Left cardiac atrium (tissue), 4 donors: ENCODE measurements at regions of chr7 and their contacts with region 1.

Region 1: GRCh38 chr7:38796626-38797501 is 112.1 kb downstream of the VPS41 start:
- DNase-seq: peak; percentile 32
- ATAC-seq: no peak

Region 2: DNA sequence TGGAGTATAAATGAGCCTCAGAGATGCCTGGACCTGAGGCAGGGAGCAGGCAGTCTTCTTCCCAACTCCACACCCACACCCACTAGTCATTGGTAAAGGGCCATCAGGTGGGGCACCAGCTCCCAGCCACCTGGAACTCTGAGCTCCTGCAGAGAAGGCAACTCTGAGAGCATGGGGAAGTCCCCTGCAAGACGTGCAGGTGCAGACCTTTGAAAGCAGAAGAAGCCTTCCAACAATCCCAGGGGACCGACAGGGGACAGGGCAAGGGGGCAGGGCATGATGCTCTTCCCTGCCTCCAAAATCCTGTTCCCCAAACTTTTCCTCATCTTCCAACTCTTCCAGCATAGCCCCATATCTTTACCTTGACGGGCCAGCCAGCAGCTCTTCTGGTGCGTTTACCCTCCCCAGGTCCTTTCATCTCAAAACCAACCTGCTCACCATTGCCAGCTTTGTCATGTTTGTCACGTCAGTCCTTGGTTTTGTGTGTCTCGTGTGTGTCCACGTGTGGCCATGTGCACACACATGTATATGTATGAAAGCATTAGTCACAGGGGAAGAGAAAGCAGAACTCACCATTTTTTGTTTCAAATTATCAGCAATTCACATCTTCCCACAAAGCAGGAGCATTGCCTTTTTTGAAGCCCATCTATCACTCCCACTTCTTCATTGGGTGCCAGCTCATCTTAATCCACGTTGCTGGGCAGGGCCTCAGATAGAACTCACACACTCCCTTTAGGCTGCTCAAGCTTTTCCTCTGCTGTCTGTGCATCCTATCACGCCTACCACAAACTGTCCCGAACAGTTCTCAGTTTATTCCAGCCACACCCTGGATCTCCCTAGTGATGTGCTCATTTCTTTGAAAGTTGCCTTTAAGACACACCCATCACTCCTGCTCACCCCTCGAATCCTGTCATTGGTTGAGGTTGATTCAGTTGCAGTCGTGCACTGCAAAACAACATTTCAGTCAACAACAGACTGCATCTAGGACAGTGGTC is 124.7 kb before region 1 on chr7:
- intact Hi-C with region 1: no loop called
- DNase-seq: no peak
- ATAC-seq: no peak

Region 3: GRCh38 chr7:38686888-38687287 is 110.0 kb before region 1 on chr7:
- intact Hi-C with region 1: no loop called
- DNase-seq: no peak
- ATAC-seq: no peak

Region 4: GRCh38 chr7:39517240-39517639 is 720.4 kb after region 1 on chr7:
- intact Hi-C with region 1: loop called (anchors 1 to 5 kb)
- DNase-seq: no peak
- ATAC-seq: no peak